ENCODE measurements at regions of chr2 and their contacts with region 1.

Region 1: GRCh38 chr2:155708071-155708470 is 624.5 kb downstream of the NR4A2 start:
- DNase-seq: peak in 1 of 2 experiments; percentile 13
- H3K4me3 ChIP-seq: no peak overlapping the region
- H3K4me3 Mint-ChIP-seq: no peak overlapping the region
- H3K27ac Mint-ChIP-seq: no peak overlapping the region
- H3K4me1 ChIP-seq: no peaks in the 10 kb centered on the region
- H3K4me1 Mint-ChIP-seq: no peaks in the 10 kb centered on the region
- H3K27me3 ChIP-seq: no peaks in the 10 kb centered on the region
- H3K27me3 Mint-ChIP-seq: no peaks in the 10 kb centered on the region
- CTCF ChIP-seq: peak in 1 of 2 experiments; percentile 50

Region 2: DNA sequence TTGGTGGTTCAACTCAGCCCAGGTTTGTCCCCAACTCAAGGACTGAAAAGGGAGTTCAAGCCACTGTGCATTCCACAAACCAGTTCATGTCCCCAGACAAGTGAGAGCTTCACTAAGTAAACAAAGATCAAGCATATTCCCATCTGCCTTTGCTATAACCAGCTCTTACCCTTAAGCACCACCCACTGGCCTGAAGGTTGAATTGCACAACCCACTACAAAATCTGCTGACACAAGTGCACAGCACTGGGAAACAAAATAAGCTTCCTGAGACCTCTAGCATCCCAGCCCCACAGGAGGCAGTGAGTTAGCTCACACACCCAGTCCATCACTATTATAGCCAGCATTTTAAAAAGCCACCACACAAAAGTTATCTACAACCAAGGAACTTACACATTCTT is 107.8 kb after region 1 on chr2:
- CTCF ChIA-PET with region 1: interaction called, 3 read pairs
- POLR2A ChIA-PET with region 1: no interaction called
- intact Hi-C with region 1: loop called (anchors 1 kb)
- DNase-seq: peak; percentile 58 to 64
- H3K4me3 ChIP-seq: no peak overlapping the region
- H3K4me3 Mint-ChIP-seq: no peak overlapping the region
- H3K27ac Mint-ChIP-seq: no peak overlapping the region
- H3K4me1 ChIP-seq: 0 out of 2 replicates have a peak, but pooled peaks cover 3% of the 10 kb centered on the region
- H3K4me1 Mint-ChIP-seq: no peaks in the 10 kb centered on the region
- H3K27me3 ChIP-seq: no peaks in the 10 kb centered on the region
- H3K27me3 Mint-ChIP-seq: no peaks in the 10 kb centered on the region
- CTCF ChIP-seq: peak; percentile 46